Right ventricle myocardium inferior (tissue), 1 donor: ENCODE measurements at regions of chr7 and their contacts with region 1.

Region 1: DNA sequence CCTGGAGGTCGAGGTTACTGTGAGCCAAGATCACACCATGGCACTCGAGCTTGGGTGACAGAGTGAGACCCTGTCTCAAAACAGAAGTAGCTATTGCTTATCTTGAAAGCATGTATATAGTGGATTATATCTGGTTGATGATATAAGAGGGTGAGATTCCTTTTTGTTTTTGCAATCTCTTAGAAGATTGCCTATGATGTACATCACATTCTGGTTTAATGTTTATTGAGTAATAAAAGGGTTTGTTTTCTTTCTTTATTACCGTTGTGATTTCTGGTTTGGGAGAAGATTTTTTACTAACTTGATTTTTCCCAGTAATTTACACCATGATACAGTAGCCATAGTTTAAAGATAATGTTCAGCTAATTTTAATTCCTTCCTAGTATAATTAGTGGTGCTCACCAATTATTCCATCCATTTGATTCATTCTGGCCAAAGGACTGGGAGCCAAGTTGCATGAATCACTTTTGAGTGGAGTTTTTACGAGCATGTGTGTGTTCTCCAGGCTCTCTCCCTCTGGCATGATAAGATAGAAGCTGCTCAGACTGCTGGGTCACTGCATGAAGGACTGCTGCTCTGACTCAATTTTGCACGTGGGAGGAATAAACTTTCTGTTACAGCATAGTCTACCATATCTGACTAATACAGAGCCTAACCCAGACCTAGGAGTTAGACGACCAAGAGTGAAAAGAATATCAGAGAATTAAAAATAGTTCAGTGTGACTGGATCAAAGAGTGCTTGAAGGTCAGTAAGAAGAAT is 13.5 kb upstream of the TSPAN13 start:
- DNase-seq: no peak
- ATAC-seq: peak; percentile 97

Region 2: GRCh38 chr7:15854841-15855524 is 885.1 kb before region 1 on chr7:
- intact Hi-C with region 1: loop called (anchors 5 kb)
- DNase-seq: no peak
- ATAC-seq: no peak

Region 3: GRCh38 chr7:16564909-16565426 is 175.1 kb before region 1 on chr7:
- intact Hi-C with region 1: no loop called
- DNase-seq: no peak
- ATAC-seq: no peak